ENCODE measurements at regions of chr1 and their contacts with region 1.

Region 1: DNA sequence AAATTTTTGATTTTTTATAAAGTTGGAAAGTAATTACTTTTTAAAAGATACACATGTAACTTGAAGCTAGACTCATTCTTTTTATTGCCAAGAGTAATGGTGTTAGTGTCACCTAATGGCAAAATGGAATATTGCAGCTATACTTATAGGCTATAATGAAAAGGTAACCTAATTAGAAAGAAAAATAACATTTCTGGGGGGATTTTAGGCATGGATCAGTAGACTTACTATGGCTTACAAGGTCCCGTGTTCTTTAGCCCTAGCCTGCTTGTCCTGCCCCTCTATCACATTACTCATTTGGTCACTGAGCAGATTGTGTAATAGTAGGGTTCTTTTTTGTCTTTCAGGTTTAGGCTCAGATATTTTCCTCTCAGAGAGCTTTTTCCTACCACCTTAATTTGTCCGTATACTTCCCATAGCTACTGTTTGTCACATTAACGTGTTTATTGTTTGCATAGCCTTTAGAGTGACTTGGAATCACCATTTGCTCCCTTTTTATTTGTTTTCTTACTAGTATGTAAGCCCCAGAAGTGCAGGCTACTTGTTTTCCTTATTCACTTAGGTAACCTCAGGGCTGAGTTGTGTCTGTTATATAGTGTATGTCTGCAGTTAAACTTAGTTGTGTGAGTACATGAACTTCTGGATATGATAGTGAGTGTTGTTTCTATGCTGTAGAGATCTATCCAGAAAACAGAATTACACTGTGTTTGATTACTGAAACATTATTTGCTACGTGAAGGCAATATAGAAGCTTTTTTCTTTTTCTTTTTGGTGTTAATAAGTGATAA is 58.7 kb downstream of the RABGAP1L start:
- DNase-seq: no peak
- H3K4me3 ChIP-seq: no peak overlapping the region
- H3K27ac ChIP-seq: no peak overlapping the region
- H3K4me1 ChIP-seq: no peaks in the 10 kb centered on the region
- H3K27me3 ChIP-seq: no peaks in the 10 kb centered on the region
- CTCF ChIP-seq: peak in 2 of 3 experiments; percentile 32 to 62; a peak in 2 of 4 replicates
- EP300 ChIP-seq: no peak
- POLR2A ChIP-seq: no peak
- RAD21 ChIP-seq: peak; percentile 64 to 84

Region 2: GRCh38 chr1:173476664-173477285 is 741.2 kb before region 1 on chr1:
- CTCF ChIA-PET with region 1: no interaction called
- POLR2A ChIA-PET with region 1: no interaction called
- DNase-seq: peak; percentile 86 to 88
- H3K4me3 ChIP-seq: peak overlapping the region; percentile 74 to 94 (median 87)
- H3K27ac ChIP-seq: 0 out of 2 replicates have a peak overlapping the region, but pooled peaks have one; percentile 52
- H3K4me1 ChIP-seq: peaks cover 2 to 18% (median 4%) of the 10 kb centered on the region in 4 experiments; a peak in 6 of 7 replicates
- H3K27me3 ChIP-seq: no peaks in the 10 kb centered on the region
- CTCF ChIP-seq: no peak
- EP300 ChIP-seq: no peak
- POLR2A ChIP-seq: peak in 1 of 2 experiments; percentile 80; a peak in 2 of 3 replicates
- RAD21 ChIP-seq: peak in 1 of 2 experiments; percentile 17; a peak in 1 of 4 replicates

Region 3: DNA sequence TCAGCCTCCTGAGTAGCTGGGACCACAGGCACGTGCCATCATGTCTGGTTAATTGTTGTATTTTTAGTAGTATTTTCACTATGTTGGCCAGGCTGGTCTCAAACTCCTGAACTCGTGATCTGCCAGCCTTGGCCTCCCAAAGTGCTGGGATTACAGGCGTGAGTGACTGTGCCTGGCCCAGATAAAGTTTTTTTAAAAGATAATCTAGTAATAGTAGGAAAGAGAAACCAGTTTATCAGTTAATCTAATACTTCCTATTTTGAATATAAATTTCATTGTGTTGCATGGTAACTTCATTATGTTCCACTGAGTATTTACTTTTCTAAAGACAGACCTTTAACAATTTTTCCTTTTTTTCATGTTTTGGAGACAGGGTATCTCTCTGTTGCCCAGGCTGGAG is 48.6 kb before region 1 on chr1:
- CTCF ChIA-PET with region 1: interaction called, 10 read pairs
- POLR2A ChIA-PET with region 1: no interaction called
- DNase-seq: no peak
- H3K4me3 ChIP-seq: no peak overlapping the region
- H3K27ac ChIP-seq: no peak overlapping the region
- H3K4me1 ChIP-seq: no peaks in the 10 kb centered on the region
- H3K27me3 ChIP-seq: no peaks in the 10 kb centered on the region
- CTCF ChIP-seq: no peak
- EP300 ChIP-seq: no peak
- POLR2A ChIP-seq: no peak
- RAD21 ChIP-seq: no peak

Region 4: GRCh38 chr1:174204697-174205308 is 13.2 kb before region 1 on chr1:
- CTCF ChIA-PET with region 1: interaction called, 25 read pairs
- POLR2A ChIA-PET with region 1: interaction called, 5 read pairs
- DNase-seq: no peak
- H3K4me3 ChIP-seq: no peak overlapping the region
- H3K27ac ChIP-seq: no peak overlapping the region
- H3K4me1 ChIP-seq: peaks cover 0 to 6% (median 0%) of the 10 kb centered on the region in 4 experiments; a peak in 1 of 7 replicates
- H3K27me3 ChIP-seq: no peaks in the 10 kb centered on the region
- CTCF ChIP-seq: no peak
- EP300 ChIP-seq: no peak
- POLR2A ChIP-seq: no peak
- RAD21 ChIP-seq: no peak